ENCODE measurements at regions of chr12 and their contacts with region 1.

Region 1: DNA sequence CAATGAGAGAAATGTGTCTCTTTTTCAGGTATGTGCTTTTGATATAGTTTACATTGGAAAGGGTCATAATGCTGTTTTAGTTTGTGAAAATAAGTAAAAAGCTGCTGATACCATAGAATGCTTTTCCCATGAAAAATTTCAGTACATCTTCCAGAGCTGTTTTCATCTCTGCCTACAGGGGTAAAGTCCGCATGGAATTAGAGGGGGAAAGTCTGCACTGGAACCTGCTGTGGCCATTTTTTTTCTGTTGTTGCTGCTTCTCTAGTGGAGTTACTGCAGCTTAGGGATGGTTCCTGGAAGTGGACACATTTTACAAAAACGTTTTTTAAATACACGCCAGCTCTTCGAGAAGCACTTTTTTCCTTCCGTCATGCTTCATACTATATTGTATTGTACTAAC is 81.3 kb downstream of the VEZT start:
- DNase-seq: no peak
- ATAC-seq: no peak
- H3K4me3 ChIP-seq: no peak overlapping the region
- H3K27ac ChIP-seq: no peak overlapping the region
- H3K4me1 ChIP-seq: peaks cover 4% of the 10 kb centered on the region; the same call in 1 of the 2 replicates
- H3K27me3 ChIP-seq: no peaks in the 10 kb centered on the region
- CTCF ChIP-seq: no peak
- POLR2A ChIP-seq: no peak
- RAD21 ChIP-seq: no peak

Region 2: GRCh38 chr12:95286713-95287112 is 12.2 kb before region 1 on chr12:
- CTCF ChIA-PET with region 1: no interaction called
- POLR2A ChIA-PET with region 1: interaction called, 16 read pairs
- dilution Hi-C with region 1: no loop called
- in situ Hi-C with region 1: no loop called
- intact Hi-C with region 1: no loop called
- DNase-seq: no peak
- ATAC-seq: no peak
- H3K4me3 ChIP-seq: no peak overlapping the region
- H3K27ac ChIP-seq: no peak overlapping the region
- H3K4me1 ChIP-seq: peaks cover 2% of the 10 kb centered on the region; the same call in 1 of the 2 replicates
- H3K27me3 ChIP-seq: no peaks in the 10 kb centered on the region
- CTCF ChIP-seq: no peak
- POLR2A ChIP-seq: no peak
- RAD21 ChIP-seq: no peak

Measured in IMR-90 (cell line).